Activated T-helper 1 cell treated with anti-CD3 and anti-CD28 coated beads, Interleukin-12 subunit alpha, Interleukin-12 subunit beta, Interleukin-2, Interleukin-4 antibody, amounts not matched to agents 30 ng/mL and 10 ng/mL and 1 ng/mL, durations not matched to agents 14 hours and 24 hours and 36 hours (primary cell): ENCODE measurements at regions of chr7 and their contacts with region 1.

Region 1: GRCh38 chr7:8125680-8126444 is 136.1 kb downstream of the ICA1 start:
- DNase-seq: peak; percentile 69
- H3K4me3 Mint-ChIP-seq: peak overlapping the region; percentile 64
- H3K27ac Mint-ChIP-seq: peak overlapping the region; percentile 98
- H3K4me1 Mint-ChIP-seq: peaks cover 82% of the 10 kb centered on the region
- H3K27me3 Mint-ChIP-seq: peaks cover 5% of the 10 kb centered on the region

Region 2: GRCh38 chr7:7672545-7673239 is 453.2 kb before region 1 on chr7:
- intact Hi-C with region 1: loop called (anchors 2 kb)
- DNase-seq: no peak
- H3K4me3 Mint-ChIP-seq: peak overlapping the region; percentile 46
- H3K27ac Mint-ChIP-seq: peak overlapping the region; percentile 64
- H3K4me1 Mint-ChIP-seq: peaks cover 28% of the 10 kb centered on the region
- H3K27me3 Mint-ChIP-seq: no peaks in the 10 kb centered on the region

Region 3: DNA sequence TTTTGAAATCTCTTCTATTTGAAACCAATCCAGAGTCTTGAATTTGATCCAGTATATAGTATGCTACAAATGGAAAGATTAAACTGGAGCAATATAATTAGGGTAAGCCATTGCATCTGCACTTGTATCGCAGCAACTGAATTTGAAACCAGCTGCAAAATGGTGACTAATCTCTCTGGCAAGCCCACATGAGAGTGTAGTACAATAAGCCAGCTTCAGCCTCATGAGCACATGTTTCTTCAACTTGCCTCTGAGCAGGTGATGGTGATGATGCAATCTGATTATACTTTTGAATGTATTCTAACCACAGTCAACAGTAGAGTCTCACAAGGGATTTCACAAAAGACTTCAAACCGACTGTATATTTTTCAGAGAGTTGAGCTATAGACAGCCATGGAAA is 406.6 kb before region 1 on chr7:
- intact Hi-C with region 1: loop called (anchors 2 kb)
- DNase-seq: peak; percentile 50
- H3K4me3 Mint-ChIP-seq: peak overlapping the region; percentile 56
- H3K27ac Mint-ChIP-seq: peak overlapping the region; percentile 80
- H3K4me1 Mint-ChIP-seq: peaks cover 27% of the 10 kb centered on the region
- H3K27me3 Mint-ChIP-seq: peaks cover 2% of the 10 kb centered on the region

Region 4: GRCh38 chr7:7772397-7772821 is 353.5 kb before region 1 on chr7:
- intact Hi-C with region 1: loop called (anchors 2 kb)
- DNase-seq: no peak
- H3K4me3 Mint-ChIP-seq: peak overlapping the region; percentile 54
- H3K27ac Mint-ChIP-seq: peak overlapping the region; percentile 42
- H3K4me1 Mint-ChIP-seq: peaks cover 23% of the 10 kb centered on the region
- H3K27me3 Mint-ChIP-seq: peaks cover 3% of the 10 kb centered on the region

Region 5: GRCh38 chr7:7851381-7851780 is 274.5 kb before region 1 on chr7:
- intact Hi-C with region 1: loop called (anchors 2 kb)
- DNase-seq: no peak
- H3K4me3 Mint-ChIP-seq: no peak overlapping the region
- H3K27ac Mint-ChIP-seq: no peak overlapping the region
- H3K4me1 Mint-ChIP-seq: peaks cover 30% of the 10 kb centered on the region
- H3K27me3 Mint-ChIP-seq: no peaks in the 10 kb centered on the region

Region 6: DNA sequence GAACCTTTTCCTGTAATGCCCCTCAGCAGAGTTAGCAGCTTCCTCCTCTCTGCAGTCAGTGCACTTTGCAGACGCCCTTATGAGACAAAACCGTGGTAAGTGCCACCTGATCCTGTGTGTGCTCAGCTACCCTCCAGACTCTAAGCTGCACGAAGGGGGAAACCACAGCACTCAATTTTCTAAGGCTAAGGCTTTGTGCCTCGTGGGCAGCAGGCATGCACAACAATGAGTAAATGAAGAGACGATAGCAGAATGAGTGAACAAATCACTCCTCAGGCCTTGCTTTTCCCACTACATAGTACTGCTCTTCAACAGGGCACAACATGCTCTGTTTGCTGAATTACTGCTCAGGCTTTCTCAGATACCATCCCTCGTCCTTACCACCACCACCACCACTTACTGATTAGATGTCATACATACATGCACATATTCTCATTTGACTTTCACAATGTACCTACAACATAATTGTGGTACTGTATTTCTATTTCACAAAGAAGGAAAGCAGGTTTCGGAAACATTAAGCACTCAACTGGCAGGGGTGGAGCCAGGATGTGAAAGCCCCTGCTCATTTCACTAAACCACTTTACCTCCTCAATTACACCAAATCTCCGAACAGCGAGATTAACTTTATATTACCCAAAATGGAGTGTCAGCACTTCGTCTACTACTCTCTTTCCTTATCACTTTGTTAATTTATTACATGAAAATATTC is 50.7 kb after region 1 on chr7:
- intact Hi-C with region 1: loop called (anchors 1 kb)
- DNase-seq: peak; percentile 60
- H3K4me3 Mint-ChIP-seq: peak overlapping the region; percentile 76
- H3K27ac Mint-ChIP-seq: peak overlapping the region; percentile 99
- H3K4me1 Mint-ChIP-seq: peaks cover 53% of the 10 kb centered on the region
- H3K27me3 Mint-ChIP-seq: peaks cover 2% of the 10 kb centered on the region